Activated CD4-positive, alpha-beta memory T cell treated with anti-CD3 and anti-CD28 coated beads for 36 hours (primary cell): ENCODE measurements at regions of chr1 and their contacts with region 1.

Region 1: DNA sequence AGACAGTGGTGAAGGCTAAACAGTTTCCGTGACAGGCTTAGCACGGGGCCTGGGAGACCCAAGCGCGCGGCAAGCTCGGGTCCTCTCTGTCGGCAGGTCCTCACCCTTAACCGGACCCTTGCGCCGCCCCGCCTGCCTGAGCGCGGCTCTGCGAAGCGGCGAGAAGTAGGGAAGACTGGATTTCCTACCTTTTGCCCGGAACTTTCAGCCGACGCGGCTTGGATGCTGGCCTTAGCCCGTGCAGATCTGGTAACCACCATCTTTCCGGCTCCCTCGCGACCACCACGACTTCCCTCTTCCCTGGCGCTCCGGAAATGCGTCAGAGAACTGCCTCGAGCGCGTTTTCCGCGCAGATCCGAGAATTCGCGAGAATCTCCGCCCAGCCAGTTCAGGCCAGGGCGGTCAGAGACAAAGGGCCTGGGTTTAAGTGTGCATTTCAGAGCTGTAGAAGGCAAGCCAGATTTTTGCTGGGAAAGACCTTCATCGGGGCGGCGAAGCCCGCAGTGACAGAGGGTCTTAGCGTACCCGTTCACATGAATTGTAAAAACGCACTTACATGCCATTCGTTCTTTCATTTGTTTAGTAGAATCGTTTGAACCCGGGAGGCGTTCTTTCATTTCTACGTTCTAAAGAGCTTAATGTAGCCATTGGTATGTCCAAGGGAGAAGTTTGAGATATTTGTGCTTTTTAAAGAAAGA is at the start of gene DNTTIP2:
- DNase-seq: peak; percentile 94
- H3K4me3 Mint-ChIP-seq: peak within 1 kb of the TSS; percentile 94
- H3K27ac Mint-ChIP-seq: peak within 1 kb of the TSS; percentile 98
- H3K4me1 Mint-ChIP-seq: peaks cover 42% of the 10 kb centered on the region
- H3K27me3 Mint-ChIP-seq: no peaks in the 10 kb centered on the region
- total RNA-seq, gene DNTTIP2: 84.4 to 91.1 TPM

Region 2: DNA sequence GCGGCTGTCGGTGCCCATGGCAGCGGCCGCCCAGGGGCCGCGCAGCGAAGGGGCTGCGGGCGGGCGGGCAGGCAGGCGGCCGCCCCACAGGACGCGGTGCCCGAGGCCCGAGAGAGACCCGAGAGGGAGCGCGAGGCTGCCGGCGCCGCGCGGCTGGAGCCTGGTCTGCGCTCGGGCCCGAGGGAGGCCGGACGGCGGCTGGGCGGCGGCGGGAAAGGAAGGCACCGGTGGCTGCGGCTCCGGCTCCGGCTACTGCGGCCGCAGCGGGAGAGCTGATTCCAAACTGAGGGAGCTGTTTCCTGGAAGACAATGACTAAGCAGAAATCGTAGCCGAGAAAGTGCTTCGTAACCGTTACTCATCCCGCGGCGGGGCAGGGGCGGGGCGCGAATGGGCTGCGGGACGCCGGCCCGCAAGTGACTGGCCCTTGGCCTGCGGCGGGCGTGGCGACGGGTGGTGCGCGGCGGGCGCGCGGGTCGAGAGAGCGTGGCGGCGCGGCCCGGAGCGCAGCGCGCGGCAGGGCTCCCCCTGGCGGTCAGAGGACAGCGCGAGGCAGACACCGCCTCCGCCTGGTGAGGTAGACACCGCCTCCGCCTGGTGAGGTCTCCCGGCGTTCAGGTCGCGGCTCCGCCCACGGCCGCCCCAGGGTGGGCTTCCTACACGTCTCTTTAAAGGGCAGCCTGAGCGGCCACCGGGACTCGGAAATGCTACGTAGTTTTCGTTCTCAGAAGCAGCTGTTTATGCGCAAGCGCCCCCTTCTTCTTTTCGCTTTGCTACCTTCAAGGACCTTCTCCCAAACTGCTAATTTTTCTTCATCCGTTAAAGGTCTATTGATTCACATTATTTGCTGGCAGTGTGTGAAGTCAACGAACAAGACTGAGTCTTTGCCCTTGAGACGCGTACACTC is 30.4 kb after region 1 on chr1 and contains the start of gene GCLM:
- CTCF ChIA-PET with region 1: interaction called, 16 read pairs
- POLR2A ChIA-PET with region 1: interaction called, 11 read pairs
- intact Hi-C with region 1: loop called (anchors 1 kb)
- DNase-seq: peak; percentile 92
- H3K4me3 Mint-ChIP-seq: peak within 1 kb of the TSS; percentile 91
- H3K27ac Mint-ChIP-seq: peak within 1 kb of the TSS; percentile 87
- H3K4me1 Mint-ChIP-seq: peaks cover 29% of the 10 kb centered on the region
- H3K27me3 Mint-ChIP-seq: no peaks in the 10 kb centered on the region
- total RNA-seq, gene GCLM: 21.7 to 26.5 TPM